Right ventricle myocardium superior (tissue), 1 donor: ENCODE measurements at regions of chr2 and their contacts with region 1.

Region 1: GRCh38 chr2:84022810-84023431 is 436.2 kb downstream of the SUCLG1 start:
- DNase-seq: no peak
- ATAC-seq: no peak

Region 2: DNA sequence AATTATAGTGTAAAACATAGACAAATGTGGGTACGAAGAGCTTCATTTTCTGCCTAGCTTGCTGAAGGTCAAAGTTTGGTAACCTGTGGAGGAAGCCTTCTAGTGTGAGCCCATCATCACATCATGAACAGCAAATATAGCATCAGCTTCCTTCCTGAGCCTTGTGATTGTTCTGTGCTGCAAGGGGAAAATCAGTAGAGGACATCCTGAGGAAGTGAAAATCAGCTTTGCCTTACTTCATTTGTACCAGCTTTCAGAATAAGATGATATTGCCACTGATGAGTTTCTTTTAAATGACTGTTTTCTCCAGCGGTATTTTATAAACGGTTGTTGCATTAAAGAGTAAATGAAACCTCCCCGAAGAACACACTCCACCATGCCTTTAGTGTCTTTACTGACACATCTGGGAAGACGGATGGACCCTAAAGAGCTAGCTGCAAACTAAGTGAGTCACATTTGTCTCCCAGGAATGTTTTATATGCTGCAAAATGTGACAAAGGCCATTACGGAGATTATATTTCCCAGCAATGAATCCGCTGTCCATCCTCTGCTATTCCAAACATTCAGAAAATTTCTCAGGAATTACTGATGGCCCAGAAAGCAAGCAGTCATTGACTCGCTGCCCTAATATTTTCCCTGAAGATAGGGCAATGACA is 836.7 kb before region 1 on chr2:
- intact Hi-C with region 1: no loop called
- DNase-seq: no peak
- ATAC-seq: no peak

Region 3: DNA sequence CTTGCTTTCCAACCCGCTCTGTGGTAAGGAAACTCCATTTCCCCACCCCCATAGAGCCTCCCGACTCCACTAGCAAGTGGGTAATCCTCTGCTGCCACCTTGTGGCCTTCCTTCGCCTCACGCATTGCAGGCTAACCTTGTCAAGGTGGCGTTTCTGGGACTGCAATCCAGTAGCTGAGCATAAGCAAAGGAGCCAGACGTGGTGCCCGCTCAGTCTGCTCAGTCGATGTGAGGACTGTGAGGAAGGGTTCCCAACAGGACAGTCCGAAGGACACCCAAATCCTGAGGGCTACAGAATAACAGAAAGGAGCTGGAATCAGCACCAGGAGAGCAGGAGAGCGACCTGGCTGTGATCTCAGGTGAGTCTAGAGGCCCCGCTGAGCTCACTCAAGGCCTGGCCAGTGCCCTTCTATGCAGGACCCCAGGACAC is 292.0 kb after region 1 on chr2:
- intact Hi-C with region 1: loop called (anchors 10 kb)
- DNase-seq: peak; percentile 77
- ATAC-seq: peak; percentile 93